ENCODE measurements at regions of chr15 and their contacts with region 1.

Region 1: GRCh38 chr15:65133548-65134200 is at the start of gene PDCD7:
- H3K4me3 ChIP-seq: peak within 1 kb of the TSS; percentile 73
- H3K27ac ChIP-seq: peak within 1 kb of the TSS; percentile 69
- H3K4me1 ChIP-seq: no peaks in the 10 kb centered on the region
- CTCF ChIP-seq: no peak

Region 2: DNA sequence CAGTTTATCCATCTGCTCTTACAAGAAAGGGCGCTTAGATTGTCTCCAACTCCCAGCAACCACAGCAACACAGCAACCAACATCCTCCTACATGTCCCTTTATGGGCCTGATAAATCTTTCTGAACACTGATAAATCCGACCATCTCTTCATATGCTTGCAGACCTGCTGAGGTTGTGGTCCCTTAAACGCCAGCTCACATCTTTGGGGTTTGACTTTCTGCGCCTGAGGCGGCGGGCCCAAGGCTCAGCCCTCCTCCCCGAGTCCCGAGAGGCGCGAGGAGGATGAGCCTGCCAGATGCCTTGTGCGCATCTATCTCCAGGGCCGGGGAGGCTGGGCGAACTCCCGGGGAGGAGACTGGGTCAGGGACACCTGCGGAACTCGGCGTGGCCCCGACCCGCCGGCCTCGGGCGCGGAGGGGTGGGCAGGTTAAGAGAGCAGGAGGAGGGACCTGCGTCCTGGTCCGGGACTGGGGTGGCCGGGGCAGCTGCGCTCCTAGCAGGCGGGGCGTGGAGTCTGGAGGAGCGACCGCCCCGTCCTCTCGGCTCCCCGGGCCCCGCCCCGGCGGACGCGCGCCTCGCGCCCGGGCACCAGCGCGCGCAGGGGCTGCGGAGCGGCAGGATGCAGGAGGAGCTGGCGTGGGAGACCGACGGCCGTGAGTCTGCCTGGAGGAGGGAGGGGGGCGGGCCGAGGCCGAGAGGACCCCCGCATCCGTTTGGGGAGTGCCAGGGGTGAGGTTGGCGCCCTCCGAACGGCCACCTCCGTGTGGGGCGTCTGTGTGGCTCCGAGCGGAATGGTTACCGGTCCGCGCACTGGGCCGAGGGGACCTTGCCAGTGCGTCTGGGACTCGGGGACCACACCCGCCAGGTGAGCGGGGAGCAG is 222.1 kb before region 1 on chr15 and contains the start of gene ANKDD1A:
- CTCF ChIA-PET with region 1: no interaction called
- POLR2A ChIA-PET with region 1: no interaction called
- H3K4me3 ChIP-seq: peak within 1 kb of the TSS; percentile 44
- H3K27ac ChIP-seq: no peak within 1 kb of the TSS
- H3K4me1 ChIP-seq: no peaks in the 10 kb centered on the region
- CTCF ChIP-seq: no peak

Region 3: GRCh38 chr15:65184868-65185738 is 51.4 kb after region 1 on chr15 and contains the start of gene CLPX:
- CTCF ChIA-PET with region 1: no interaction called
- POLR2A ChIA-PET with region 1: interaction called, 17 read pairs
- H3K4me3 ChIP-seq: peak within 1 kb of the TSS; percentile 91
- H3K27ac ChIP-seq: peak within 1 kb of the TSS; percentile 78
- H3K4me1 ChIP-seq: no peaks in the 10 kb centered on the region
- CTCF ChIP-seq: no peak